Right ventricle myocardium inferior (tissue), 1 donor: ENCODE measurements at regions of chr4 and their contacts with region 1.

Region 1: DNA sequence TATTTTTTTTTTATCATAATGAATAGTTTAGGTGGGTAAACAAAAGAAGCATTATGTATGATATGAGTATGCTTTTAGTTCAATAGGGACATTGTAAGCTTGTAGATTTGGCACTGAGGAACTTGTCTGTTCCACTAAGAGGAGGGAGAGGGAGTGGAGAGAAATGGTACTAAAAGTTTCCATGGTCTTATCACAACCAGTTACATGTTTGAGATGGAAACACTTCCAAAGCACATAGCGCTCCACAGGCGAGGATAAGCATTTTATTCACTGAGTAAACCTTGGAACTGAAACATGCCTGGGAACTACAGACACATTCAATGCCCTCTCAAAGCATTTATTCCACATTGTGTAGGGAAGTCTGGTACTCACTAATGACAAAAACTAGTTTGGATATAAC is 15.5 kb downstream of the MYOZ2 start:
- DNase-seq: no peak
- ATAC-seq: peak; percentile 91

Region 2: GRCh38 chr4:119246177-119246733 is 95.1 kb after region 1 on chr4:
- intact Hi-C with region 1: no loop called
- DNase-seq: no peak
- ATAC-seq: no peak

Region 3: DNA sequence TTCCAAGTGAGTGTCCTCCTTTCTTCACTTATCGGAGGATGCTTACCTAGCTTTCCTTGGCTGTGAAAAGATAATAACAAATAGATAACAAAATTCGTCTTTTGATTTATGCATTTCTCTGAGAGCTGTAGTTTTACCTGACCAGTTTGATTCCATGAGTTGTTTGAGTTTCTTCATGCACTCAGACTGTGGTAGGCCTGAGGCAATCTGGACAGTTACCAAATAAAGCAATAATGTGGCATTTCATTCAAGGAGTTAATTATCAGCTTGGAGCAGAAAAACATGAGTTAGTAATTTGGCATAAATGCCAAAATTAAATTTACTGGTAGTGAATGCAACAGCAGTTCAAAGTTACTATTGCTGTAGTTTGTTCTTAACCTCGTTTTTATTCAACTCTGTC is 117.3 kb after region 1 on chr4:
- intact Hi-C with region 1: loop called (anchors 10 kb)
- DNase-seq: no peak
- ATAC-seq: no peak

Region 4: DNA sequence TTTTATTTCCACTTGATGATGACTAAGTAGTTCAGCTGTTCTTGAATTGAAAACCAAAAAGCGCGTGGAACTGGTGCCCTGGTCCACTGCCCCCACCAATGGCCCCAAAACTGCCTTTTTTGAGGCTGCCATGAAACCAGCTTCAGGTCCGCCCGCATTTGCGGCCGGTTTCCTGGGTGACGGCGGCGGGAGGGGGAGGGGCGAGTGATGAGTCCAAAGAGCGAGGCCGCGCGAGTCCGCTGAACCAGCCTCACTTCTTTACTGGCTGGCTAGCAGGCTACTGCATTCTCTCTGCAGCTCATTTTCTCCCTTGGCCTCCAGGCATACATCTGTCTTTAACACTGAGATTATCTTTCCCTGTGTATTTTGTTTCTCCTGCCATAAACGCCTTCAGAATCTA is 243.7 kb after region 1 on chr4:
- intact Hi-C with region 1: no loop called
- DNase-seq: no peak
- ATAC-seq: no peak